Common myeloid progenitor, CD34-positive (primary cell): ENCODE measurements at regions of chr12 and their contacts with region 1.

Region 1: DNA sequence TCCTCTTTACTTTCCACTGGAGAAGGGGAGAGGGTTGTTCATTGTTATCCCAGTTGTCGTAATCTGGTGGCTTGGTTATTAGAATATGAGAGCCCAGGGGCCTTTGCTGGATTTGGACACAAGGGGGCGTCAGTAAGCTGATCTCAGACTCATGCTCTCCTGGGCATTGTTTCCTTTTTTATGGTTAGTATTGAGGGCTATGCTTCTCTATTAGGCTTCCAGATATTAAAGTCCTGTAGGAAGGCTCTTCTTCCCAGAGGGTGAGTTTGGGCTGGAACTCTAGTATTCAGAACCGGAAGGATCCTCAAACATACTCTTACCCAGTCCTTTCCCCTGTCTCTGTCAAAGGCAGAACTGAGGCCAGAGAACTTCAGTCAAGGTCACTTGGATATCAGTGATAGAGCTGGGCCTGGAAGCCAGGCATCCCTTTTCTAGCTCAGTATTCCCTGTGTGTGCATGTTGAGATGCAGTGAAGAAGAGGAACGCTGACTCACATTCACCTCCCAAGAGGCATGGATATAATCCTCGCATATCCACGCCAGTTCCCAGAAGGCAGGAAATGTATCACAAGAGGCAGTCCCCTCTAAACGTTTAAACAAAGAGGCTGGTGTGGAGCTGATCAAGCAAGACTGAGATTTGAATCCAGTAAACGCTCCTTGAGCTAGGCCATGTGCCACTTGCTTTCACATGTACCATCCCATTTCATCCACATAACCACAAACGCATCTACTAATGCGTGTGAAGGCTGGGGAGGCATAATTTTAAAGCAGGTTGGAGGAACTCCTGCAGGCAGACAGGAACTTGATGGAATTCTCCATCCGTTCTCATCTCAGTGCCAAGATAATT is 41.6 kb downstream of the UBE3B start:
- DNase-seq: peak; percentile 33 to 61 (median 52)
- H3K4me3 ChIP-seq: no peak overlapping the region
- H3K27ac ChIP-seq: no peak overlapping the region
- H3K4me1 ChIP-seq: no peaks in the 10 kb centered on the region
- H3K27me3 ChIP-seq: no peaks in the 10 kb centered on the region

Region 2: DNA sequence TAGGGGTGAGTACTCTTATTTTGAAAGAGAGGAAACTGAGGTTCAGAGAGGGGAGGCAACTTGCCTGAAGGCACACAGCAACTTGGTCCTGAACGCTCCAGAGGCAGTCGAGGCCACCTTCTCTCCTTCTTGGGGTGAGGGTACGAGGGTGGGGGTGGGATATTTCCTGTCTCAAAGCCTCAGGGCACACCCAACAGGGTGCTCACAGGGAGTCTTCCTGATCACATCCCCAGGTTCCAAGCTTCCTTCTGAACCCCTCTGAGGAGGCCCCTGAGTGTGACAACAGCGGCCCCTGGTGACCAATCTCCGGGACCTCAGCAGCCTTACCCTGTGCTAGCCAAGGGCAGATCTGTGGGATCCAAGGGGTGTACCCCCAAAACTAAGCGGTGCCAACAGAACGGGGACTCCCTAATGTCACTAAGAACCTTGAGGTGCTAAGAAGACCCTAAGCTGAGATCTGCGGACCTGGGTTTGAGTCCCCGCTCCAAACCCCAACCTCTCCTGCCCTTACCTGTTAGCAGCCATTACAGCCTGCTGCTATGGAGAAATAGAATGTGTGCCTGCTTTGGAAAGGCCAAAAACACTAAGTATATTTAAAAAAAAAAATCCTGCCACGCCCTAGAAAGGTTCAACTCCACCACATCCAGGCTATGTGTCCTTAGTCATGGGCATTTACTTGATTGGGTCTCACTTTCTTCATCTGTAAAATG is 256.3 kb after region 1 on chr12:
- CTCF ChIA-PET with region 1: interaction called, 101 read pairs
- POLR2A ChIA-PET with region 1: no interaction called
- DNase-seq: peak; percentile 64 to 81 (median 76)
- H3K4me3 ChIP-seq: no peak overlapping the region
- H3K27ac ChIP-seq: no peak overlapping the region
- H3K4me1 ChIP-seq: peaks cover 0 to 9% (median 4%) of the 10 kb centered on the region in 4 experiments
- H3K27me3 ChIP-seq: no peaks in the 10 kb centered on the region